ENCODE measurements at regions of chr20 and their contacts with region 1.

Region 1: DNA sequence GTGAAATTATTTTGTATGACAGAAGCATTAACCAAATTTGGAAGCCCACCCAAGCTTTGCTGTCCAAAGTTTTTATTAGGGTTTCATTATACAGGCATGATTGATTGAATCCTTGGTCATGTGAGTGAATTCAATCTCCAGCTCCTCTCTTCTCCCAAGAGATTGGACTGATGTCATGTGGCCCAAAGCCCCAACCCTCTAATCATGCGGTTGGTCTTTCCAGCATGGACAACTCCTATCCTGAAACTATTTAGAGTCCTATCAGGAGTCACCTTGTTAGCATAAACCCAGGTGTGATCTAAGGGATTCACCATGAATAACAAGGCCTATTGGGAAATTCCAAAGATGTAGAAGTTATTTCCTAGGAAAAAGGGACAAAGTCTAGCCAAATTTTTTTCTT is 10.6 kb downstream of the POLR3F start:
- DNase-seq: no peak
- ATAC-seq: no peak
- H3K4me3 ChIP-seq: no peak overlapping the region
- H3K27ac ChIP-seq: no peak overlapping the region
- H3K4me1 ChIP-seq: no peaks in the 10 kb centered on the region
- H3K27me3 ChIP-seq: no peaks in the 10 kb centered on the region
- CTCF ChIP-seq: no peak
- POLR2A ChIP-seq: no peak
- RAD21 ChIP-seq: no peak

Region 2: GRCh38 chr20:17624551-17625240 is 853.1 kb before region 1 on chr20:
- CTCF ChIA-PET with region 1: no interaction called
- POLR2A ChIA-PET with region 1: no interaction called
- dilution Hi-C with region 1: no loop called
- in situ Hi-C with region 1: no loop called
- intact Hi-C with region 1: no loop called
- DNase-seq: no peak
- ATAC-seq: no peak
- H3K4me3 ChIP-seq: no peak overlapping the region
- H3K27ac ChIP-seq: no peak overlapping the region
- H3K4me1 ChIP-seq: no peaks in the 10 kb centered on the region
- H3K27me3 ChIP-seq: no peaks in the 10 kb centered on the region
- CTCF ChIP-seq: no peak
- POLR2A ChIP-seq: no peak
- RAD21 ChIP-seq: no peak

Region 3: DNA sequence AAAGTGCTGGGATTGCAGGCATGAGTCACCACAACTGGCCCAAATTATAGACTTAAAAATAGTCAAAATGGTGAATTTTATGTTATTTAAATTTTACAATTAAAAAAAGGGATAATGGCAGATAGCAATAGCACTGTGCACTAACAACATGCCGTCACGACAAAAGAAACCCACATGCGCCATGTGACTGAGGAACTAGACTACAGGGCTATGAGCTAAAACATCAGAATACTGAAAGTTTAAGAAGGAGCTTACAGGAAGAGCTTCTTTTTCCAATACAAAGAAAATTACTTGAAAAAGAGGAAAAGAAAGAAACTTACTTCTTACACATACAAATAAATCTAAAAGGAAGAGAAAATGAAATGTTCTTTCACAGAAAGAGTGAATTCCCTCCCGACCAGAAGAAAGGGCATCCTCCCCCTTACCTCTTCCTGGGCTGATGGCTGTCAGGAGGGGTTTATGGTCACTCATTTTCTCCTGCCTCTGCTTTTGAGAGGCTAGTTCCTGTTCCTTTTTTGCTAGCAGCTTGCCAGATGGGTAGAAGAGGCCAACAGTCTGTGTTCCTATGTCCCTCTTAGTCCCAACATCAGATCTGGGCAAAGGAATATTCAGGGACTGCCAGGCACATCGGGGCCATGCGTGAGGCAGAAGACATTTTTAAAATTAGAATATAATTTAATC is 65.5 kb before region 1 on chr20:
- CTCF ChIA-PET with region 1: no interaction called
- POLR2A ChIA-PET with region 1: no interaction called
- dilution Hi-C with region 1: no loop called
- in situ Hi-C with region 1: no loop called
- intact Hi-C with region 1: no loop called
- DNase-seq: no peak
- ATAC-seq: no peak
- H3K4me3 ChIP-seq: no peak overlapping the region
- H3K27ac ChIP-seq: no peak overlapping the region
- H3K4me1 ChIP-seq: no peaks in the 10 kb centered on the region
- H3K27me3 ChIP-seq: no peaks in the 10 kb centered on the region
- CTCF ChIP-seq: no peak
- POLR2A ChIP-seq: no peak
- RAD21 ChIP-seq: no peak

Region 4: DNA sequence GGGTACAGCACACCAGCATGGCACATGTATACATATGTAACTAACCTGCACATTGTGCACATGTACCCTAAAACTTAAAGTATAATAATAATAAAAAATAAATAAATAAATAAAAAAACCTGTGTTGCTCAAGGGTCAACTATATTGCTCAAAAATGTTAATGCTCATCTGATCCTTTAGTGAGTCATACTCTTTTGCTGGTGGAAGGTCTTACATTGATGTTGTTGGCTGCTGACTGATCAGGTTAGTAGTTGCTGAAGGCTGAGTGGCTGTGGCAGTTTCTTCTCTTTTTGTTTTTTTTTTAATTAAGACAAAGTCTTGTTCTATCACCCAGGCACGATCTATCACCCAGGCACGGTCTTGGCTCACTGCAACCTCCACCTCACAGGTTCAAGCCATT is 59.8 kb after region 1 on chr20:
- CTCF ChIA-PET with region 1: no interaction called
- POLR2A ChIA-PET with region 1: no interaction called
- dilution Hi-C with region 1: no loop called
- in situ Hi-C with region 1: no loop called
- intact Hi-C with region 1: loop called (anchors 10 kb)
- DNase-seq: peak; percentile 51
- ATAC-seq: peak; percentile 40; the same call in 1 of the 2 replicates
- H3K4me3 ChIP-seq: no peak overlapping the region
- H3K27ac ChIP-seq: no peak overlapping the region
- H3K4me1 ChIP-seq: no peaks in the 10 kb centered on the region
- H3K27me3 ChIP-seq: no peaks in the 10 kb centered on the region
- CTCF ChIP-seq: no peak
- POLR2A ChIP-seq: no peak
- RAD21 ChIP-seq: no peak